Mammary epithelial cell (primary cell): ENCODE measurements at regions of chr1 and their contacts with region 1.

Region 1: DNA sequence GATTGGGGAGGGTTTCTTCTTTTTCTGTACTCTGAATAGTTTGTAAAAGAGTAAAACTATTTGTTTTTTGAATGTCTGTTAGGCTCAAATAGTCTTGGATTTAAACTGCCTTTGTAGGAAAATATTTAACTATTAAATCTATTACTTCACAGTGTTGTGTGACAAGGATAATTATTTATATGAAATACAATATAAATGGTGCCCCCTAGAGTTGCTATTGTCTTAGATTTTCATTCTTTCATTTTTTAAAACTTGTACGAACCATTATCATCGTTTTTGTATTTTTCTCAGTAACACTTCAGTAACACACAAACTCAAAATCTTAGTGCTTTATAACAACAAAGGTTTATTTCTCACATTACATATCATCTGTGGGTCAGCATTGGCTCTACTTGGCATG is 37.4 kb downstream of the C1orf185 start:
- DNase-seq: no peak
- H3K4me3 ChIP-seq: no peak overlapping the region
- H3K27ac ChIP-seq: no peak overlapping the region
- H3K4me1 ChIP-seq: no peaks in the 10 kb centered on the region
- H3K27me3 ChIP-seq: no peaks in the 10 kb centered on the region
- CTCF ChIP-seq: peak; percentile 1 to 10

Region 2: GRCh38 chr1:51088488-51088887 is 51.0 kb before region 1 on chr1:
- CTCF ChIA-PET with region 1: no interaction called
- dilution Hi-C with region 1: no loop called
- in situ Hi-C with region 1: no loop called
- intact Hi-C with region 1: loop called (anchors 2 kb)
- DNase-seq: no peak
- H3K4me3 ChIP-seq: no peak overlapping the region
- H3K27ac ChIP-seq: no peak overlapping the region
- H3K4me1 ChIP-seq: peaks cover 4% of the 10 kb centered on the region
- H3K27me3 ChIP-seq: no peaks in the 10 kb centered on the region
- CTCF ChIP-seq: peak; percentile 30 to 69